Left cardiac atrium (tissue), 4 donors: ENCODE measurements at regions of chr20 and their contacts with region 1.

Region 1: GRCh38 chr20:5529331-5530148 is 212.8 kb upstream of the PROKR2 start:
- DNase-seq: peak; percentile 83
- ATAC-seq: peak; percentile 83 to 90

Region 2: GRCh38 chr20:5402903-5403531 is 126.5 kb before region 1 on chr20:
- intact Hi-C with region 1: no loop called
- DNase-seq: no peak
- ATAC-seq: no peak

Region 3: GRCh38 chr20:5486377-5487054 is 43.0 kb before region 1 on chr20:
- intact Hi-C with region 1: no loop called
- DNase-seq: no peak
- ATAC-seq: no peak

Region 4: DNA sequence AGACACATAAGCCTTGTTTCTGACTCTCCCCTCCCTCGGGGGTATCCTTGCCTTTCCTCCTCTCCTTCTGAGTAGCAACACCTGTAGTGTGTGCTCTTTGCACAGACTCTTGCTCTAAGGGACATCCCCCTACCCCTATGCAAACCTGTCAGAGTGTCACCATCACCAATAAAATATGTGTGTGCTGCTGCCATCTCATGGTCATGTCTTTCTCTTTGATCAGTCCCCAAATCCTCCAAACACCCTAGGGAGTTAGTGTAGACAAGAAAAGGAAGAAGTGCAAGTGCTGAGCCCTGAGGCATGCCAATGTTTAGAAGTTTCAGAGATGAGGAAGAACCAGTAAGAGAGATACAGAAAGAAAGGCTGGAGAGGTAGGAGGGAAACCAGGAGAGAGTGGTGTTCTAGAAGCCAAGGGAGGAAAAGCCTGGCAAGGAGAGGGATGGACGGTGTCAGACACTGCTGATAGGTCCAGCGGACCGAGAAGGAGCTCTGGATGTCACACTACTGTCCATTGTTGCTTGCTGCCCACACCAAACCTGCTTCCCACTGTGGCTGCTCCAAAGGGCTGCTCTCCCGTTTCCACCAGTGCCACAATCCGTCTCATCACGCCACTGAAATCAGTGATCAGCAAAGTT is 404.4 kb after region 1 on chr20:
- intact Hi-C with region 1: loop called in 1 of 2 experiments (anchors 5 kb)
- DNase-seq: no peak
- ATAC-seq: peak; percentile 37 to 72